ENCODE measurements at regions of chr14 and their contacts with region 1.

Region 1: DNA sequence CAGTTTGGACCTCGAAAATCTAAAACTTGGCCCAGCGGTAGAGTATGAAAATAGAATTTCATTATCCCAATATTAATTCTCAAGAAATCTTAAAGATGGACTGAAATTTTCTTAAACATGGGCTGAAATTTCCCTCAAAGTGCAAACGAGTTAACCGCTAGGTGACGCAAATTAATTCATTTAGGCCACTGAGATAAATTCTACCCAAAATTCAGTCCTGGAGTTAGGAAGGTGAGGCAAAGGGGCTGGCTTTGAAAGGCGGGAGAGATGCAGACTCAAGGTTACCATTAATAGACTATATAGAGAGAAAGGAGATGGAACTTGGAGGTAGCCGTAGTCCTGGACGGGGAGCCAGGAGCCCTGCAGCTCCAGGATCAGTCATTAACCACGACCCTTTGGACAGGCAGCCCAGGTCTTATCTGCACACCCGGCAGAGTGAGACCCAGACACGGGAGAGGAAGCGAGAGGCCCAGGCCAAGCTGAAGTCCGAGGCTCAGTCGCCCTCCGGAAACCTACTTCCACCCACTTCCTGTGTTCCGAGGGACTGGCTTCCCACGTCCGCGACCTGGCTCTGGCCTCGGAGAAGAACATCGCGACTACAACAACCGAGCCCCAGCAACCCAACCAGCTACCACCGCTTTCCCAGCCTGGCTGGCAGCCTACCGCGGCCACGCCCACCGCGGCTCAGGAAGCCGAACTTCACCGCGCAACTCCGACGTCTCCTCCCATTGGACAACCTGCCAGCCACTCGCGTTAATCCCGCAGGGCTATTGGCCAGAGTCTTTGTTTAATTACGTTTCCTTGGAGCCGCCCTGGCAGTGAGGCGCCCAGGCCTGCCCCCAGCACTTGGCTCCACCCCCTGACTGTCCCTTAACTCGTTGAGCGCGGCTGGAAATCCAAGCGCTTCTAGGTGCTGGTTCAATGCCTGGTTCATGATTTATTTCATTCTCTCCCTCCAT is at the start of gene EFCAB11:
- DNase-seq: peak; percentile 95
- H3K4me3 Mint-ChIP-seq: peak within 1 kb of the TSS; percentile 95
- H3K27ac Mint-ChIP-seq: peak within 1 kb of the TSS; percentile 93
- H3K4me1 Mint-ChIP-seq: peaks cover 58% of the 10 kb centered on the region
- H3K27me3 Mint-ChIP-seq: no peaks in the 10 kb centered on the region
- total RNA-seq, gene EFCAB11: 6.0 and 8.2 TPM in 2 replicates

Region 2: GRCh38 chr14:88562831-88563686 is 1391.3 kb before region 1 on chr14 and contains the start of gene ZC3H14:
- intact Hi-C with region 1: loop called (anchors 2 kb)
- DNase-seq: peak; percentile 87
- H3K4me3 Mint-ChIP-seq: peak within 1 kb of the TSS; percentile 91
- H3K27ac Mint-ChIP-seq: peak within 1 kb of the TSS; percentile 91
- H3K4me1 Mint-ChIP-seq: peaks cover 29% of the 10 kb centered on the region
- H3K27me3 Mint-ChIP-seq: peaks cover 22% of the 10 kb centered on the region
- total RNA-seq, gene ZC3H14: 61.0 and 65.5 TPM in 2 replicates

Region 3: DNA sequence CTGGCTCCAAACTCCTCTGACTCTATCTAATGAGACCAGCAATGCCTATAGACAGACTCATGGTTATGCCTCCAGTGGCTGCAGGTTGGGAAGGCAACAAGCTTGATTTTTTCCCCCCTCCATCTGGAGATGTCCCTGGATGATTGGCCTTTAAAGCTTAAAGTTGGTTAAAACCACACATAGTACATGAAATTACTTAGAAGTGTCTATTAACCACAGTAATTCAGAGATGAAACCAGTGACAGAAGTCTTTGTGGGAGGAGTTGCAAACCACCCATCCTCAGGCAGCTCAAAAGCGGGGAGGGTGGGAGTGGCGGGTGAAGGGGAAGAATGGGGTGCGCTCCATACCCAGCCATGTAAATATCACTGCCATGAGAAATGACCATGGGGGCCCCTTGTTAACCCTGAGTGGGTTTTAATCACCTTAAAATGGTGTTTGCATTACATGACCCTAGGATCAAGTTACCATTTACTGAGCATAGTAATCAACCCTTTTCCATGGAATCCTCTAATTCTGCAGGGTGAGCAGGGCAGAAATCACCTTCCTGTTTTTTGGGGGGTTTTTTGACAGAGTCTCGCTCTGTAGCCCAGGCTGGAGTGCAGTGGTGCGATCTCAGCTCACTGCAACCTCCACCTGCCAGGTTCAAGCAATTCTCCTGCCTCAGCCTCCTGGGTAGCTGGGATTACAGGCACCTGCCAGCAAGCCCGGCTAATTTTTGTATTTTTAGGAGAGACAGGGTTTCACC is 670.9 kb before region 1 on chr14:
- intact Hi-C with region 1: loop called (anchors 2 kb)
- DNase-seq: peak; percentile 9
- H3K4me3 Mint-ChIP-seq: peak overlapping the region; percentile 28
- H3K27ac Mint-ChIP-seq: peak overlapping the region; percentile 45
- H3K4me1 Mint-ChIP-seq: peaks cover 75% of the 10 kb centered on the region
- H3K27me3 Mint-ChIP-seq: no peaks in the 10 kb centered on the region

Region 4: GRCh38 chr14:89965839-89966238 is 11.5 kb after region 1 on chr14:
- intact Hi-C with region 1: no loop called
- DNase-seq: no peak
- H3K4me3 Mint-ChIP-seq: no peak overlapping the region
- H3K27ac Mint-ChIP-seq: peak overlapping the region; percentile 24
- H3K4me1 Mint-ChIP-seq: peaks cover 27% of the 10 kb centered on the region
- H3K27me3 Mint-ChIP-seq: no peaks in the 10 kb centered on the region

Region 5: GRCh38 chr14:90060312-90060964 is 106.1 kb after region 1 on chr14:
- intact Hi-C with region 1: loop called (anchors 2 kb)
- DNase-seq: peak; percentile 51
- H3K4me3 Mint-ChIP-seq: peak overlapping the region; percentile 73
- H3K27ac Mint-ChIP-seq: no peak overlapping the region
- H3K4me1 Mint-ChIP-seq: peaks cover 30% of the 10 kb centered on the region
- H3K27me3 Mint-ChIP-seq: peaks cover 71% of the 10 kb centered on the region

Region 6: GRCh38 chr14:90331497-90332435 is 377.4 kb after region 1 on chr14 and contains the start of gene NRDE2:
- intact Hi-C with region 1: loop called (anchors 1 kb)
- DNase-seq: peak; percentile 90
- H3K4me3 Mint-ChIP-seq: peak within 1 kb of the TSS; percentile 93
- H3K27ac Mint-ChIP-seq: peak within 1 kb of the TSS; percentile 88
- H3K4me1 Mint-ChIP-seq: peaks cover 26% of the 10 kb centered on the region
- H3K27me3 Mint-ChIP-seq: peaks cover 24% of the 10 kb centered on the region
- total RNA-seq, gene NRDE2: 22.9 and 24.4 TPM in 2 replicates

Region 7: GRCh38 chr14:90429754-90430153 is 475.4 kb after region 1 on chr14:
- intact Hi-C with region 1: no loop called
- DNase-seq: no peak
- H3K4me3 Mint-ChIP-seq: no peak overlapping the region
- H3K27ac Mint-ChIP-seq: no peak overlapping the region
- H3K4me1 Mint-ChIP-seq: no peaks in the 10 kb centered on the region
- H3K27me3 Mint-ChIP-seq: peaks cover 1% of the 10 kb centered on the region

Region 8: GRCh38 chr14:90758028-90758889 is 803.9 kb after region 1 on chr14:
- intact Hi-C with region 1: loop called (anchors 1 kb)
- DNase-seq: peak; percentile 93
- H3K4me3 Mint-ChIP-seq: peak overlapping the region; percentile 74
- H3K27ac Mint-ChIP-seq: peak overlapping the region; percentile 78
- H3K4me1 Mint-ChIP-seq: peaks cover 6% of the 10 kb centered on the region
- H3K27me3 Mint-ChIP-seq: peaks cover 27% of the 10 kb centered on the region